MCF 10A (cell line): ENCODE measurements at regions of chr2 and their contacts with region 1.

Region 1: GRCh38 chr2:241289597-241289996 is 25.9 kb downstream of the HDLBP start:
- DNase-seq: no peak
- H3K4me3 Mint-ChIP-seq: no peak overlapping the region
- H3K27ac Mint-ChIP-seq: no peak overlapping the region
- H3K4me1 Mint-ChIP-seq: peaks cover 40% of the 10 kb centered on the region
- H3K27me3 Mint-ChIP-seq: no peaks in the 10 kb centered on the region
- CTCF ChIP-seq: no peak

Region 2: DNA sequence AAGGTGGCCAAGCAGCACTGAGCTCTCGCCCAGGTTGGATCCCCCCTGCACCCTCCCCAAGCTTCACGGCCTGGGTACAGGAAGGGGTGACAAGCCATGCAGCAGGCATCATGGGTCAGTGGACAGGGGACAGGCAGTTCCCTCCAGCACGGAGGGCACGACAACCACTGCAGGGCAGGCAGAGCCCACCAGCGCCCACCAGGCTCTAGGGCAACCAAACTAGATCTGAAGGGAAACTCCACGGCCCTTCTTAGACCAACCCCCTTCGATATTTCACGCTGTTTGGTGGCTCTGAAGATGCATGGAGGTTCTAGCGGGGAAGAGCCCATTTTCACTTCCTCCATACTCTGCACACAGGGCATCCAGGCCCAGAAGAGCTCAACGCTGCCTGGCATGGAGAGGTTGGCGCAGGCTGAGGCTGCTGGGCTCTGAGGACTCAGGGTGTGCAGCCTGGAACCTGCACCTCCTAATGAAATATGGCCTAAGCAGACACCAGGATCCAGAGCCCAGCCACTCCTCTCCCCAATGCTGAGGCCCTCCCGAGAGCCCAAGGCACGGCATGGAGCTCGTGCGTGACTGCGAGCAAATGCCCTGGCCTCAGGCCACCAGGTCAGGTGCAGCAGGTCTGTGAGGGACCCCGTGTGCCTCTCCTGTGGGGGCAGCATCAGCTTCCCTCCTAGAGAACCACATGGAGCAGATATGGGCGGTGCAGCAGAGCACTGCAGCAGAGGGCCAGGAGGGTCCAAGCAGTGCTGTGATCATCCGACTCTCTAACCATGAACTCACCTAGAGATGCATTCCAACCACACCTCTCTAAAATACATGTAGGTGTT is 178.8 kb before region 1 on chr2:
- CTCF ChIA-PET with region 1: no interaction called
- POLR2A ChIA-PET with region 1: no interaction called
- intact Hi-C with region 1: no loop called
- DNase-seq: no peak
- H3K4me3 Mint-ChIP-seq: no peak overlapping the region
- H3K27ac Mint-ChIP-seq: no peak overlapping the region
- H3K4me1 Mint-ChIP-seq: no peaks in the 10 kb centered on the region
- H3K27me3 Mint-ChIP-seq: no peaks in the 10 kb centered on the region
- CTCF ChIP-seq: no peak

Region 3: DNA sequence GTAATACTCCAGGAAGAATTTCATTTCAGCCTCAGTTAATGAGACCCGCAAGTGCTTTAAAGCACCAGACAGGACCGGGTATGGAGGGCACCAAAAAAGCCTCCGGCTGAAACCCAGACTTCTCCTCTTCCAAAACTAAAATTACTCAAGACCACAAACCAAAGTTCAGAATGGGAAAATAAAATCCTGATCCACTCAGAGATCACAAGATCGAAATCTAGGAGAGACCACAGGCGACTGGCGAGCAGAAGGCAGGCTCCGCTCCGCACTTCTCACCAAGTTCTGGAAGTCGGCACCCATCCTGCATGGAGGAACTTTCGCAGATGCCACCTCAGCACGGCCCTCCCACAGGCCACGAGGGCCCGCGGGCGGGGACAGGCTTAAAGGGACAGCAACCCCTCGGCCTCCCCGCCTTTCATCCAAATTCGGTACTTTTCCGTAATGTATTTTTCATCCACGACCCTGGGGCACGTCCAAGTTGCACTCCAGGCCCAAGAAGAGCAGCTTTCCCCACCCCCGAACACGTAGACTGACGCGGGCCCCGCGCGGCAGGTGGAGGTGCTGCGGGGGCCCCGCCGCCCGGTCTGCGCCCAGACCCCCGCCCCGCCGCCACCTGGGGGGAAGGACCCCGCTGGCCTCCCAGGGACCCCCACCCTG is 17.8 kb before region 1 on chr2:
- CTCF ChIA-PET with region 1: interaction called, 6 read pairs
- POLR2A ChIA-PET with region 1: interaction called, 11 read pairs
- intact Hi-C with region 1: no loop called
- DNase-seq: peak; percentile 83
- H3K4me3 Mint-ChIP-seq: peak overlapping the region; percentile 92
- H3K27ac Mint-ChIP-seq: peak overlapping the region; percentile 88
- H3K4me1 Mint-ChIP-seq: peaks cover 48% of the 10 kb centered on the region
- H3K27me3 Mint-ChIP-seq: no peaks in the 10 kb centered on the region
- CTCF ChIP-seq: no peak

Region 4: DNA sequence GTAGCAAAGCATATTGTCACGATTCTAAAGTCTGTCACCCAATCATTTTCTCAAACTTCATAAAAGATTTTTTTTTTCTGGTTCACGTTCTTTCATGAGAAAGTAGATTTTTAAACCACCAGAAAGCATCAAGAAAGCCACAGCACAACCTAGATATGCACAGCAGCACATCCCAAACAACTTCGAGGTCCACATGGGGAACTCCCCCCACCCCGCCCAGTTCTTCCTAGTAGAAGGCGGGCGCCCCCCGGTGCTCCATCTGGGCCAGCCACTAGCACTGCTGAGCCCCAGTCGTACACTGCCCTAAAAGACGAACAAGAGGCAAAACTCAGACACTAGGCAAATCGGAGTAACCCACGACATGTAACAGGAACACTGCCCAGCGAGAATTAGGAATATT is 10.4 kb after region 1 on chr2:
- CTCF ChIA-PET with region 1: interaction called, 3 read pairs
- POLR2A ChIA-PET with region 1: interaction called, 11 read pairs
- intact Hi-C with region 1: no loop called
- DNase-seq: no peak
- H3K4me3 Mint-ChIP-seq: no peak overlapping the region
- H3K27ac Mint-ChIP-seq: no peak overlapping the region
- H3K4me1 Mint-ChIP-seq: peaks cover 22% of the 10 kb centered on the region
- H3K27me3 Mint-ChIP-seq: no peaks in the 10 kb centered on the region
- CTCF ChIP-seq: no peak

Region 5: DNA sequence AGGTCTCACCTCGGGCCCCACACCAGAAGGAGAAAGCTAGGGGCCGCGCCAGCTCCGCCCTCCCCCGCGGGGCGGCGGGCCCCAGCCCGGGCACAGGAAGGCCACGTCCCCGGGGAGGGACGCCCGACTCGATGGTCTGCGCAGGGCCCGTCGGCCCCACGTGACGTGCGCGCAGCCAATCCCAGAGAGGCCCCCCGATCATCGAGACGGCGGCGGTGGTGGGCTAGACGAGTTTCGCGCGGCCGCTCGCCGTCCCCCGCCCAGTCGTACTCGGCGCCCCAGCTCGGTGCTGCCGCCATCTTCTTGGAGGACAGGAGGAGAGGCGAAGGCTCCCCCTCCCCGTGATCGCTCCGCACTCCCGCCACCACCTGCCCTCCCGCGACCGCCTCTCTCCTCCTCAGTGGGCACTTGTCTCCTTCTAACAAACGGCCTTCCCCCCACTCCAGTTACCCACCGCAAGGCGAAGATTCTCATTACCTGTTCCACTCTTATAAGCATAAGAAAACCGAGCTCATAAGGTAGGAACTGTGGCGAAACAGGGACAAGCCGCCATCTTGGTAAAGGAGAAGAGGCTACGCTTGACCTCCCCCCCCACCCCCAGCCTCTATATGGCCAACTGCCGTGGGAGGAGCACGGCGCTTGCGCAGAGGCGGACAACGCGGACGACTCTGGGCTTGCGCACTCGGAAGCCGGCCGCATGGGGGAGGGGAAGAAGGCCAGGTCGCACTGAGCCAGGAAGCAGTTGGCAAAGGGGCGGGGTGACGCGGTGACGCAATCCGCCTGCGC is 25.7 kb after region 1 on chr2 and contains the start of gene HDLBP:
- CTCF ChIA-PET with region 1: interaction called, 10 read pairs
- POLR2A ChIA-PET with region 1: interaction called, 263 read pairs
- intact Hi-C with region 1: loop called (anchors 2 kb)
- DNase-seq: peak; percentile 98
- H3K4me3 Mint-ChIP-seq: peak within 1 kb of the TSS; percentile 98
- H3K27ac Mint-ChIP-seq: peak within 1 kb of the TSS; percentile 100
- H3K4me1 Mint-ChIP-seq: peaks cover 38% of the 10 kb centered on the region
- H3K27me3 Mint-ChIP-seq: no peaks in the 10 kb centered on the region
- CTCF ChIP-seq: peak; percentile 25
- total RNA-seq, gene HDLBP: 670 and 743 TPM in 2 replicates

Region 6: DNA sequence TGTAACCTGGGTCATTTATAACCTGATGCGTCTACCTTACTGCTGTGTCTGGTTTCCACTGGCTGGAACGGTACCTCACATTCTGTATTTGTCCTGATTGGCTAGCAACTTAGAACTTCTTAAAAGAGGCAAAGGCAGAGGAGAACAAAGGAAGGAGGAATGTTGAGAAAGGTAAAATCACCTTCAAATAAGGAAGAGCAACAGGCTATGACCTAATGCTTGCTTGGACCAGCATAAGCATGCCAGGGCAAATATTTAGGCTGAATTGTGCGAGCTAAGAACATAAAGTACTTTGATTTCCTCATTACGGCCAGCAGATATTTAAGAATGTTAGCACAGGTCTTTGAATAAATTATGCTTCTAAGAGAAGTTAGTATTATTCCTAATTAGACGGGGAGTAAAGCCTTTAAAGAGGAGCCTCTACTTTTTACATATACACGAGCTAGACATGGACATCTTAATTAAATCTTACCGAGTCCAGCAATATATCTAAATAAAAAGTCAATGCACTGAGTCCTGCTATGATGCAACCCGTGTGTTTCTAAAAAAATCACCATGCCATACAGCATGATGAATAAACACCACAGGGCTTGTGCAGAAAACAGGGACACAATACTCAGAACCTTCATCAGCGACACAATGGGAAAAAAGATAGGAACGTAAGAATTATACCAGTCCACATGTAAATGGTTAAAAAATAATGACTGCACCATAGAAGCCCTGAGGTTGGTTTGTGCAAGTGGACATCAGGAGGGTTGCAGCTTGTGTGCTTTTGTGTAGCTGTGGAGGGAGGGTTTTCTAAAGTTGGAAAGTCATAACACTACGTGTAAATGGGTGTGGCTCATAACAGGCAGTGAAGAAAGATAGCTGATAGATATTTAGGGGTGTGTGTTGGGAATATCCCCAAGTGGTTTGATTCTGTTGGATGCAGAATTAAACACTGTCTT is 40.3 kb after region 1 on chr2:
- CTCF ChIA-PET with region 1: interaction called, 3 read pairs
- POLR2A ChIA-PET with region 1: interaction called, 13 read pairs
- intact Hi-C with region 1: no loop called
- DNase-seq: peak; percentile 32
- H3K4me3 Mint-ChIP-seq: peak overlapping the region; percentile 55
- H3K27ac Mint-ChIP-seq: peak overlapping the region; percentile 77
- H3K4me1 Mint-ChIP-seq: peaks cover 33% of the 10 kb centered on the region
- H3K27me3 Mint-ChIP-seq: no peaks in the 10 kb centered on the region
- CTCF ChIP-seq: no peak

Region 7: GRCh38 chr2:241803387-241804325 is 514.1 kb after region 1 on chr2:
- CTCF ChIA-PET with region 1: no interaction called
- POLR2A ChIA-PET with region 1: no interaction called
- intact Hi-C with region 1: no loop called
- DNase-seq: peak; percentile 49
- H3K4me3 Mint-ChIP-seq: peak overlapping the region; percentile 60
- H3K27ac Mint-ChIP-seq: no peak overlapping the region
- H3K4me1 Mint-ChIP-seq: no peaks in the 10 kb centered on the region
- H3K27me3 Mint-ChIP-seq: no peaks in the 10 kb centered on the region
- CTCF ChIP-seq: no peak